Ovary (tissue), 10 donors: ENCODE measurements at regions of chr5 and their contacts with region 1.

Region 1: DNA sequence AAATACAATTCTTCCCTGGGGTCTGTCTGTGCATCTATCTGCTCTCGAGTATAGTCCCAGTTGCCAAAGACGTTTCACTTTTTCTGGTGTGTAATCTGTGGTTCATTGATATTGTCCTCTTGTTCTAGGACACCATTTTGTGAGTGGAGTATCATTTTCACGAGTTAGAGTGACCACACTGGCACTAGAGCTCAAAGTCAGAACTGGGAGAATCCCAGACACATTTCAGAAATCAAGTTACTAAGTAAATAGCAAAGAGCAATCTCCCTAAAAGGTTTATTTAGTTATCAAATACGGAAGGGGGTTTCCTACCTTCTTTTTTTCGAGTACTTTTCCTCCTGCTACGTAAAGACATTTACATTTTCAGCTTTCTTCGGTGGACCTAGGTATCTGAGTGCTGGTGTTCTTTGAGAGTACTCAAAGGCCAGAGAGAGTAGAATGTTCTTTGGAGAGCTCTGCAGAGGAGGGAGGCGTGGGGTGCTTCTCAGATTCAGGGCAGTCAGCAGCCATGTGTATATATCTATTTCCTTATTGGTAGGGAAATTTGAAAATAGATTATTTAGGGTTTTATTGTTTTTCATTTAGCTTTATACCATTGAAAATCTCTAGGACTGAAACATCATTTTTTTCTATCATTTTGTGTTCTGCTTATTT is 8.9 kb upstream of the HSPA9 start:
- DNase-seq: no peak
- H3K4me3 ChIP-seq: no peak overlapping the region
- H3K27ac ChIP-seq: no peak overlapping the region
- H3K4me1 ChIP-seq: no peaks in the 10 kb centered on the region
- H3K27me3 ChIP-seq: no peaks in the 10 kb centered on the region
- CTCF ChIP-seq: no peak
- EP300 ChIP-seq: no peak
- POLR2A ChIP-seq: no peak

Region 2: GRCh38 chr5:139051392-139051791 is 467.3 kb after region 1 on chr5:
- intact Hi-C with region 1: no loop called
- DNase-seq: no peak
- H3K4me3 ChIP-seq: no peak overlapping the region
- H3K27ac ChIP-seq: no peak overlapping the region
- H3K4me1 ChIP-seq: peaks cover 2% of the 10 kb centered on the region
- H3K27me3 ChIP-seq: no peaks in the 10 kb centered on the region
- CTCF ChIP-seq: no peak
- EP300 ChIP-seq: no peak
- POLR2A ChIP-seq: no peak

Region 3: DNA sequence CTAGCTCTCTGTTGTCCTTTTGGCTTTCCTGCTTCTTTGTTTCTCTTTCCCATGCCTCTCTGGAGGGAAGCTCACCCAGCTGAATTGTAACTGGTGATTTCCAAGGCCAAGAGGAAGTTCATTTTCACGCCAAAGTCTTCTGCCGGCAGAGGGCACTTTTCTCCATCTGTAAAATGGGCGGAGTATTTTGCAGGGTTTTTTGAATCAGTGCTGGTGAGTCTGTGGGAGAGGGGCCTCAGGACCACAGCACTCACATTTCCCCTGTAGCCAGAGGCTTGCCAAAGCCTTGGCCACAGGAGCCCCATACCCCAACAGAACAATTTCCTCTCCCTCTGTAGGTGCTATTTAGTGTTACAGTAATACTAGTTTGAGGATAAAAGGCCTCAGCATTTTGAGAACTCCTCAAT is 667.2 kb after region 1 on chr5:
- intact Hi-C with region 1: loop called in 1 of 4 experiments (anchors 10 kb)
- DNase-seq: no peak
- H3K4me3 ChIP-seq: no peak overlapping the region
- H3K27ac ChIP-seq: no peak overlapping the region
- H3K4me1 ChIP-seq: no peaks in the 10 kb centered on the region
- H3K27me3 ChIP-seq: no peaks in the 10 kb centered on the region
- CTCF ChIP-seq: no peak
- EP300 ChIP-seq: no peak
- POLR2A ChIP-seq: no peak

Region 4: DNA sequence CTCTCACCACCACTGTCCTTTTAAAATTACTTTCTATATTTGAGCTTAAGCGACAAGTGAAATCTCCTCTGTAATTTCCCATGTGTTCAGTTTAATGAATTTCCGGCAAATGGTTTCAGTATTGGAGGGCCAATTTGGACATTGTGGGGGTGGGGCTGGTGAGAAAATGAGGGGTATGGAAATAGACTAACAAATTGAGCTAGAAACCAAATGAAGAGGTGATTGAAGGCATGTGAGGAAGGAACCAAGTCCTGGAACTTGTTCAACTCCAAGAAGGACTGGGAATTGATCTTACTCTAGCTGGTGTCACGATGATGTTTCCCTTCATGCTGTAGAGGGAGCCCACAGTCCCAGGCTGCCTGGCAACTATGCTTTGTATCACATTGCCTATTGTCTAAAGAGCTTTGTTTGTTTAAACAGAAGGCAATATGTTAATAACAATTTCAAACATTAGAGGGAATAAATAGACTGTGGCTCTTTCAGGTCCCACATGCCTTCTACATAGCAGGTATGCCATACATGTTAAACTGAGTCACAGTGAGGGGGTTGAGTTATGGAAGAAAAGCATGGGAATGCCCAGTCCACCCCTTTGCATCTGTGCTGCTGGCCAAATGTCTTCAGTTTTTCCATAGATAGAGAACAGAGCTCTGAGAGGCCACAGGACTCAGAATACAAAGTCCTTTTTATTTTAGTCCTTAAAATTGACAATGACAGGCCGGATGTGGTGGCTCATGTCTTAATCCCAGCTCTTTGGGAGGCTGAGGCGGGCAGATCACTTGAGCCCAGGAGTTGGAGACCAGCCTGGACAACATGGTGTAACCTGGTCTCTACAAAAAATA is 684.5 kb after region 1 on chr5:
- intact Hi-C with region 1: loop called in 2 of 4 experiments (anchors 5 to 10 kb)
- DNase-seq: no peak
- H3K4me3 ChIP-seq: no peak overlapping the region
- H3K27ac ChIP-seq: no peak overlapping the region
- H3K4me1 ChIP-seq: peaks cover 5% of the 10 kb centered on the region
- H3K27me3 ChIP-seq: no peaks in the 10 kb centered on the region
- CTCF ChIP-seq: no peak
- EP300 ChIP-seq: no peak
- POLR2A ChIP-seq: no peak